CD8-positive, alpha-beta T cell (primary cell): ENCODE measurements at regions of chr10 and their contacts with region 1.

Region 1: DNA sequence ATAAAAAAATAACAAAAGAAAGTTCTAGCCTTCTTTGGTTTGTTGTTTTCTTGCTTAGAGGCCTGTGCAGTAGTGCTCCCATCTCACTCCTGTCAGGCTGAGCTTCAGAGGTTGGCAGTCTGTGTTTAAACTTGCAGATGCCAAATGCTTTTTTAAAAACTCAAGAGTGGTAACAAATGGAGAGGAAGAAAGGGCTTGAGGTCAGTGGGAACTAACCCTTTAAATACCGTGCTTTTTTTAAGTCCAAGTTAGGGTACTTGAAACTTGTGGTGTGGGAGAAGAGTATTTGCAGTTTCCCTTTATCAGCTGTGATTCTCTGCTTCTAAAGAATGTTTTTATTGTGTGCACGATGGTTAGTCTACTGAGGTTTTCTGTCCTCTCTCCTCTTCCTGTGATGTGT is 29.4 kb downstream of the ZRANB1 start:
- DNase-seq: no peak
- ATAC-seq: no peak
- H3K4me3 ChIP-seq: no peak overlapping the region
- H3K4me3 Mint-ChIP-seq: no peak overlapping the region
- H3K27ac ChIP-seq: no peak overlapping the region
- H3K27ac Mint-ChIP-seq: peak overlapping the region; percentile 21
- H3K4me1 ChIP-seq: peaks cover 12% of the 10 kb centered on the region
- H3K4me1 Mint-ChIP-seq: peaks cover 43% of the 10 kb centered on the region
- H3K27me3 ChIP-seq: no peaks in the 10 kb centered on the region
- H3K27me3 Mint-ChIP-seq: no peaks in the 10 kb centered on the region
- CTCF ChIP-seq: no peak

Region 2: GRCh38 chr10:124928087-124928486 is 43.2 kb before region 1 on chr10:
- CTCF ChIA-PET with region 1: no interaction called
- POLR2A ChIA-PET with region 1: no interaction called
- intact Hi-C with region 1: loop called in 1 of 2 experiments (anchors 1 kb)
- DNase-seq: no peak
- ATAC-seq: no peak
- H3K4me3 ChIP-seq: no peak overlapping the region
- H3K4me3 Mint-ChIP-seq: no peak overlapping the region
- H3K27ac ChIP-seq: no peak overlapping the region
- H3K27ac Mint-ChIP-seq: no peak overlapping the region
- H3K4me1 ChIP-seq: peaks cover 12% of the 10 kb centered on the region
- H3K4me1 Mint-ChIP-seq: peaks cover 52% of the 10 kb centered on the region
- H3K27me3 ChIP-seq: no peaks in the 10 kb centered on the region
- H3K27me3 Mint-ChIP-seq: no peaks in the 10 kb centered on the region
- CTCF ChIP-seq: no peak

Region 3: GRCh38 chr10:124949543-124949942 is 21.7 kb before region 1 on chr10:
- CTCF ChIA-PET with region 1: no interaction called
- POLR2A ChIA-PET with region 1: no interaction called
- intact Hi-C with region 1: no loop called
- DNase-seq: no peak
- ATAC-seq: no peak
- H3K4me3 ChIP-seq: no peak overlapping the region
- H3K4me3 Mint-ChIP-seq: no peak overlapping the region
- H3K27ac ChIP-seq: no peak overlapping the region
- H3K27ac Mint-ChIP-seq: no peak overlapping the region
- H3K4me1 ChIP-seq: no peaks in the 10 kb centered on the region
- H3K4me1 Mint-ChIP-seq: peaks cover 55% of the 10 kb centered on the region
- H3K27me3 ChIP-seq: no peaks in the 10 kb centered on the region
- H3K27me3 Mint-ChIP-seq: no peaks in the 10 kb centered on the region
- CTCF ChIP-seq: no peak